ENCODE measurements at regions of chr1 and their contacts with region 1.

Region 1: DNA sequence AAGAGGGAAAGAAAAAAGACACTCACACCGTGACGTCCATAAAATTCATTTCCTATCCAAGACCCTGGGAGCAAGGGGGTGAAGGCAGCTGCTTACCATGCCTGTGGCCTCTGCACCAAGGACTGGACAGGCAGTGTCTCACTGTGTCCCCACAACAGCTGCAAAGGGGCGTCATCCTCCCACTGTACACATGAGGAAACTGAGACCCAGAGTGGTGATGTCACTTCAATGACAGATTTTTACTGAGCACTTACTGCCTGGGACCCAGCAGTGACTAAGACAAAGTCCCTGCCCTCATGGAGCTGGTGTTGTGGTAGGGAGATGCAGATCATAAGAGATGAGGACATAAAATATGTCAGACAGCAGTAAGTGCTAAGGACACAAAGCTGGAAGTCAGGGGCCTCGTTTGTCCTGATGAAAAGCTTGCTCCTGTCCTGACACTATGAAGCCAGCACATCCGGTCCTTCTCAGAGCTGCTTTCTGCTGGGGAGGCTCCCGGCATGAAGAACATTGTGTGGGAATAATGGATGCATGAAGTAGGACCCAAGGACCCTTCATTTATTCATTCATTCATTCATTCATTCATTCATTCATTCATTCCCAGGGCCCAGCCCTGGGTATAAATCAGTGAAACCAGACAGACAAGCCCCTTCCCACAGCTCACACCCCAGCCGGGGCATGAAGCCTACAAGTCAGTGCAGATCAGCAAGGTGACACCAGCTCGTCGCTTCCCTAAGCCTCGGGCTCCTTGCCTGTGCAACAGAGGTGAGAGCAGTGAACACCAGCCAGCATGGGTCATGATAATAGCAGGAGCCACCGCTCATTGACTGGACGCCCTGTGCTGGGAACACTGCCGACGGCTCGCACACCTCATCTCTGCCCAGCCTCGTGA is 473.7 kb downstream of the MATN1 start:
- DNase-seq: no peak
- H3K4me3 ChIP-seq: no peak overlapping the region
- H3K27ac ChIP-seq: no peak overlapping the region
- H3K4me1 ChIP-seq: no peaks in the 10 kb centered on the region
- H3K27me3 ChIP-seq: no peaks in the 10 kb centered on the region
- CTCF ChIP-seq: no peak

Region 2: DNA sequence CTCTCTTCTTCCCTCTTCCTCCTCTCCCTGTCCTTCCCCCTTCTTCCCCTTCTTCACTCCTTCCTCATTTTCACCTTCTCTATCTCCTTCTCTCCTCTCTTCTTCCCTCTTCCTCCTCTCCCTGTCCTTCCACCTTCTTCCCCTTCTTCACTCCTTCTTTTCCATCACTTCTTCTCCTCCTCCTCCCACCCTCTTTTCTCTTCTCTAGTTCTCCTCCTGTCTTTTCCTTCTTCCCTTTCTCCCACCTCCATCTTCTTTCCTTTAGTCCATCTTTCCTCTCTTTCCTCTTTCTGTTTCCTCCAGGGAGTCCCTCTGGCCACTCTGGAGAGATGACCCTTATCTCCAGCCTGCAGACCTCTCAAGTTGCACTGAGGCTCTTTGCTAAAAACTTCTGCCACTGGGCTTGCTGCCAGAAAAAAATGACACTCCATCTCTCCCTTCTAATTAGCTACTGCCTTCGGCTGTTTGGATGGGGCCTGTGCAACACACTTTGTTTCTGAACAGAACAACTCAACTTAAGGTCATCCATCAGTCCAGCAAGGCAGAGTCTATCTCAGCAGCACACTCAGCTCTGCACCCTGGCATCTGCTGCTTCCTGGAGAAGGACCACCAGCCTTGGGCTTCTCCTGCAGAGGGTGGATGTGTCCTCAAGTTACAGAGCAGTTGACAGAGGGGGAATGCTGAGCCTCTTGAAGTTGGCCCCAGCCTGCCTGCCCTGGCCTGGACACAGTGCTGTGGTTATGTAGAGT is 65.1 kb before region 1 on chr1:
- CTCF ChIA-PET with region 1: no interaction called
- dilution Hi-C with region 1: loop called (anchors 5 kb)
- in situ Hi-C with region 1: no loop called
- intact Hi-C with region 1: no loop called
- DNase-seq: no peak
- H3K4me3 ChIP-seq: no peak overlapping the region
- H3K27ac ChIP-seq: no peak overlapping the region
- H3K4me1 ChIP-seq: no peaks in the 10 kb centered on the region
- H3K27me3 ChIP-seq: no peaks in the 10 kb centered on the region
- CTCF ChIP-seq: no peak

Region 3: DNA sequence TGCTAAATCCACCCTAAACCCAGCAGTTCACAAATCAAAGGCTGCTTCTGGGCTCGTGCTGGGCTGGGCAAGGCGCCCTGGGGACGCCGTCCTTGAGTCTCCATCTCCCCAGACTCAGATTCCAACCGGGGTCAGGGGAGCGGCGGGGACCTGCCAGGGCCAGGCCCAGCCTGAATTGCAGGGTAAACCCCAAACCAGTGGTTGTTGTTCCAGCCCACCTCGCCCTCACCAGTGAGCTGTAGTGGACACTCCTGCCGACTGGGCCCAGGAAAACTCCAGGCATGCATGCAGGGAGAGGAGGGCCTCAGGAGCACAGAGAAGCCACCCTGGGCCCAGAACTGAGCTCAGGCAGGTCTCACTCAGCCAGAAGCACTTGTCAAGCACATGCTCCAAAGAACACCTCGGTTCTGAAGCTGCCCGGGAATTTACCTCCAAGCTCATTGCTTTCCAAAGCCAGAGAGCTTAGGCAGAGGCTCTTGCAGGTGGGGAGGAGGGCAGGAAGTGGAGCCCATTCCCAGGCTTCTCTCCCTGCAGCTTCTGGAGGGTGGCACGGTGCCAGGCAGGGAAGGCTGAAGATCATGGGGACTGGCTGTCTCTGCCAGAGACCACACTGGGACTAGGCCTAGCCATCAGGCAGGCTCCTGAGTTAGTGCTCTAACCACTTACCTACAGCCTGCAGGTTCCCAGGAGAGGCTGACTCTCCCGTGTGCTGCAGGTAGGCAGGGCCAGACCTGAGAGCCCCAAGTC is 36.7 kb after region 1 on chr1:
- CTCF ChIA-PET with region 1: no interaction called
- dilution Hi-C with region 1: loop called (anchors 5 kb)
- in situ Hi-C with region 1: no loop called
- intact Hi-C with region 1: no loop called
- DNase-seq: no peak
- H3K4me3 ChIP-seq: no peak overlapping the region
- H3K27ac ChIP-seq: no peak overlapping the region
- H3K4me1 ChIP-seq: no peaks in the 10 kb centered on the region
- H3K27me3 ChIP-seq: no peaks in the 10 kb centered on the region
- CTCF ChIP-seq: no peak

Region 4: DNA sequence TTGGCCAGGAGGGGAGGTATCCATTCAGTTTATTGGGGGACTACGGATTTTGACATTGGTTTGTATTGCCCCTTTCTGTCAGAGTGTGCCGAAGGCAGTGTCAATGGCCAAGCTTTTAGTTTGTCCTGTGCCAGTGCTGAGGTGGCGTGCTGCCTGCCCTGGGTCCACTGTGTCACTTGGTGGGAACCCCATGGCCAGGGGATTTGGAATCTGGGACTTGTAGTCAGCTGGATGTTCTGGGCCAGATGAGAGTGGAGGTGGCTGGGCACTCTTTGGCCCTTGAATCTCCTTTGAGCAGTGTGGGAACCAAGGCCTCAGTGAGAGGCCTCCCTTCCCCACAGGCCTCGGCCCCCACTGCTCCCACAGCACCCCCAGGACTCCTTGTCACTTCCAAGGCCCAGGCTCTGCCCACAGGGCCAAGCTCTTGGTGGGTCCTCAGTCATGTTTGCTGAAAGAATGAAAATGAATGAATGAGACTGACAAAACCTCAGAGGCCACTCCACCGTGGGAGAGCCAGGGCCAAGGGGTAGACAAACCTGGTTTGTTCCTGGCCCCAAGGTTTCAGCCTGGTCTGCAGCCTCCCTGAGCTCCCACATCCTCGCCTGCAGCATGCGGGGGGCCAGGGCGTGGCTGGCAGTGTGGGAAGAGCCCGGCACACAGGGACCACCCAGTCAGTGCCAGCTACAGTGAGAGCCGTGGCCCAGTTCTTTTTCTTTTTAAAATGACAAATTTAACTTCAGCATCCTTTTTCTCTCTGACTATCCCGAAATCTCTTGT is 61.5 kb after region 1 on chr1:
- CTCF ChIA-PET with region 1: no interaction called
- dilution Hi-C with region 1: loop called (anchors 5 kb)
- in situ Hi-C with region 1: no loop called
- intact Hi-C with region 1: no loop called
- DNase-seq: no peak
- H3K4me3 ChIP-seq: no peak overlapping the region
- H3K27ac ChIP-seq: no peak overlapping the region
- H3K4me1 ChIP-seq: no peaks in the 10 kb centered on the region
- H3K27me3 ChIP-seq: no peaks in the 10 kb centered on the region
- CTCF ChIP-seq: no peak

Measured in mammary epithelial cell (primary cell).